Activated CD4-positive, alpha-beta memory T cell treated with anti-CD3 and anti-CD28 coated beads, Interleukin-2, amount 10 ng/mL, durations not matched to agents 7 days and 5 days (primary cell): ENCODE measurements at regions of chr6 and their contacts with region 1.

Region 1: GRCh38 chr6:143940011-143940597 is 68.0 kb downstream of the PLAGL1 start:
- DNase-seq: peak; percentile 61
- H3K4me3 Mint-ChIP-seq: no peak overlapping the region
- H3K27ac Mint-ChIP-seq: no peak overlapping the region
- H3K4me1 Mint-ChIP-seq: peaks cover 5% of the 10 kb centered on the region
- H3K27me3 Mint-ChIP-seq: no peaks in the 10 kb centered on the region

Region 2: GRCh38 chr6:143575440-143575839 is 364.7 kb before region 1 on chr6:
- CTCF ChIA-PET with region 1: interaction called, 32 read pairs
- POLR2A ChIA-PET with region 1: no interaction called
- DNase-seq: peak; percentile 50
- H3K4me3 Mint-ChIP-seq: no peak overlapping the region
- H3K27ac Mint-ChIP-seq: no peak overlapping the region
- H3K4me1 Mint-ChIP-seq: peaks cover 1% of the 10 kb centered on the region
- H3K27me3 Mint-ChIP-seq: peaks cover 3% of the 10 kb centered on the region

Region 3: DNA sequence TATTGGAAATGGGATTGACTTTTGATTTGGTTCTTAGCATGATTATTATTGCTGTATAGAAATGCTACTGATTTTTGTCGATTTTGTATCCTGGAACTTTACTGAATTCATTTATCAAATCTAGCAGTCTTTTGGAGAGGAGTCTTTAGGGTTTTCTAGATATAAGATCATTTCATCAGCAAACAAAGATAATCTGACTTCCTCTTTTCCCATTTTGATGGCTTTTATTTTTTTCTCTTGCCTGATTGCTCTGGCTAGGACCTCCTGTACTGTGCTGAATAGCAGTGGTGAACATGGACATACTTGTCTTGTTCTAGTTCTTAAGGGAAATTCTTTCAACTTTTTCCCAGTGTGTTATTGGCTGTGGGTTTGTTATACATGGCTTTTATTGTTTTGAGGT is 11.3 kb before region 1 on chr6:
- CTCF ChIA-PET with region 1: interaction called, 12 read pairs
- POLR2A ChIA-PET with region 1: no interaction called
- DNase-seq: no peak
- H3K4me3 Mint-ChIP-seq: no peak overlapping the region
- H3K27ac Mint-ChIP-seq: no peak overlapping the region
- H3K4me1 Mint-ChIP-seq: no peaks in the 10 kb centered on the region
- H3K27me3 Mint-ChIP-seq: peaks cover 25% of the 10 kb centered on the region

Region 4: DNA sequence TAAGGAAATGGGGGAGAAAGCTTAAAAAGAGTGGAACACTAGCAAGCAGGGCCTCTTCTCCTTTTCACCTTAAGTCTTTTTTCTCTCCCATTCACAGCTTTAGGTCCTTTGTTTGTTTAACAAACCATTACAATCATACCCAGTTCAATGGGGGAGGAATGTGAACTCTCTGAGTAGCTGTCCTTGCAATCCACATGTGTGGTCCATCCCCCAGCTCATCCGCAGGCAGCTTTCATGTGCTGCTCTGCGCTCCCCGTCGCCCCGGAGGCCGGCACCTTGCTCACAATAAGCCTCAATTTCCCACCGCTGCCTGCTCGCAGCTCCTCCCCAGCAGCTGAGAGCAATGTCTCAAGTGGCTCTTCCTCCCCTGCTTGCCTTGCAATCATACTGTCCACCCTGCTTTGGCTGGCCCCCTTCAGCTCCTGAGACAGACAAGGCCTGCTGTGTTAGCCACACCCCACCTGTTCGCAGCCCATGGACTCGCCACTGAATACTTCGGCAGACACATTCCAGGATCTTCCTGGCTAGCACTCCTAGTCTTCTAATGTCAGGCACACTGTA is 18.8 kb after region 1 on chr6:
- CTCF ChIA-PET with region 1: interaction called, 12 read pairs
- POLR2A ChIA-PET with region 1: no interaction called
- DNase-seq: no peak
- H3K4me3 Mint-ChIP-seq: no peak overlapping the region
- H3K27ac Mint-ChIP-seq: no peak overlapping the region
- H3K4me1 Mint-ChIP-seq: no peaks in the 10 kb centered on the region
- H3K27me3 Mint-ChIP-seq: no peaks in the 10 kb centered on the region

Region 5: GRCh38 chr6:143999406-143999805 is 59.3 kb after region 1 on chr6:
- CTCF ChIA-PET with region 1: interaction called, 10 read pairs
- POLR2A ChIA-PET with region 1: no interaction called
- DNase-seq: no peak
- H3K4me3 Mint-ChIP-seq: no peak overlapping the region
- H3K27ac Mint-ChIP-seq: no peak overlapping the region
- H3K4me1 Mint-ChIP-seq: no peaks in the 10 kb centered on the region
- H3K27me3 Mint-ChIP-seq: peaks cover 12% of the 10 kb centered on the region

Region 6: DNA sequence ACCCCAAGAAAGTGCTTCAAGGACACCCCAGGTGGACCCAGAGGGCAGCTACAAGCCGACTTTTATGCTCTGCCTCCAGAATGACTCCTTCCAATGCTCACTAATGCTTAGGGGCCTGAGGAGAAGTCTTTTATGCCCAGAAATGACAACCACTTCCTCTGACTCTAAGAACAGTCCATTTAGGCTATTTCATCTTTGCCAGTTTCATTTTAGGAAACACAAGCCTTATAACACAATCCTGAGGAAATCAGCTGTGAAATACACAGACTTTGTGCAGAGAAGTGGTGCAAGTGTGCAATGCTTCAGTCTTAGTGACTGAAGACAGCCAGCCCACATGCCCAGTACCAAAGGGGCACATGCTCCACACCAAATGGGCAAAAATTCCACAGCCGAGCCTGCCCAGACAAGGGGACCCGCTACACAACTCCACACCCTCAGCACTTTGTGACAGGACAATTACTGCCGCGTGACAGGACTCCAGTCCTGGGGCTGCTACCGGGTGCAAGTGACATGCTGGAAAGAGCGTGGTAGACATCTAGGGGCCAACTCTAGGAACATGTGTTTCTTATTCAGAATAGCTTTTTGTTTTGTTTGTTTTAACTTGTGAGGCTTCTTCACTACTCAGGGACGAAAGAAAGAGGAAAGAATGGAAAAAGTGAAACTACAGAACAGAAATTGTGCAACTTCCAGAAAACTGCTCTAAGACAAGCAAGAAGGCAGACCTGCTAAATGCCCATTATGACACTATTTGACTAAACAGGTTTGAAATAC is 96.1 kb after region 1 on chr6:
- CTCF ChIA-PET with region 1: interaction called, 13 read pairs
- POLR2A ChIA-PET with region 1: no interaction called
- DNase-seq: no peak
- H3K4me3 Mint-ChIP-seq: no peak overlapping the region
- H3K27ac Mint-ChIP-seq: no peak overlapping the region
- H3K4me1 Mint-ChIP-seq: peaks cover 16% of the 10 kb centered on the region
- H3K27me3 Mint-ChIP-seq: no peaks in the 10 kb centered on the region

Region 7: GRCh38 chr6:144055121-144055931 is 115.2 kb after region 1 on chr6:
- CTCF ChIA-PET with region 1: no interaction called
- POLR2A ChIA-PET with region 1: no interaction called
- DNase-seq: peak; percentile 64
- H3K4me3 Mint-ChIP-seq: peak overlapping the region; percentile 69
- H3K27ac Mint-ChIP-seq: peak overlapping the region; percentile 82
- H3K4me1 Mint-ChIP-seq: peaks cover 32% of the 10 kb centered on the region
- H3K27me3 Mint-ChIP-seq: no peaks in the 10 kb centered on the region

Region 8: DNA sequence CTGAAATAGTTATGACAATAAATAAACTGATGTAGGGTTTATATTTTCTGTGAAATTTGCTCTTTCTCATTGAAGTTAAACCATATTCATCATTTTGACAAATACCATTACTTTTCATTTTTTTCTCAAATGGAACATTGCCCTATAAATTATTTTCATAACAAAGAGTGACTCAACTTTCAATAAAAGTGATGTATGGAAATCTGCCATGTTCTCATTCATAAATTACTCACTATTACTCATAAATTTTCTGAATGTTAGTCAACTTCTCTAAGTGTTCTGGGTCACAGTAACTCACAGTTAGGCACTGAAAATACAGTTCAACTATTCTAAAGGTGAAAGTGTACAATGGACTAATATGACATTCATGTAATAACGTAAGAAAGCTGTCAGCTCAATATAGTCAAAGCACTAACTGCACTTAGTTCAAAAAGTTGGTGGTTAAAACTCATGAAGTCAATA is 191.2 kb after region 1 on chr6:
- CTCF ChIA-PET with region 1: no interaction called
- POLR2A ChIA-PET with region 1: no interaction called
- DNase-seq: no peak
- H3K4me3 Mint-ChIP-seq: no peak overlapping the region
- H3K27ac Mint-ChIP-seq: no peak overlapping the region
- H3K4me1 Mint-ChIP-seq: peaks cover 17% of the 10 kb centered on the region
- H3K27me3 Mint-ChIP-seq: peaks cover 18% of the 10 kb centered on the region